Activated B cell treated with CpG ODN at 0.5 μM for 24 hours (primary cell): ENCODE measurements at regions of chr4 and their contacts with region 1.

Region 1: GRCh38 chr4:101169044-101170014 is 178.0 kb downstream of the PPP3CA start:
- DNase-seq: no peak
- ATAC-seq: peak; percentile 99
- H3K4me3 Mint-ChIP-seq: no peak overlapping the region
- H3K27ac Mint-ChIP-seq: no peak overlapping the region
- H3K4me1 Mint-ChIP-seq: peaks cover 21% of the 10 kb centered on the region
- H3K27me3 Mint-ChIP-seq: no peaks in the 10 kb centered on the region
- CTCF ChIP-seq: no peak

Region 2: DNA sequence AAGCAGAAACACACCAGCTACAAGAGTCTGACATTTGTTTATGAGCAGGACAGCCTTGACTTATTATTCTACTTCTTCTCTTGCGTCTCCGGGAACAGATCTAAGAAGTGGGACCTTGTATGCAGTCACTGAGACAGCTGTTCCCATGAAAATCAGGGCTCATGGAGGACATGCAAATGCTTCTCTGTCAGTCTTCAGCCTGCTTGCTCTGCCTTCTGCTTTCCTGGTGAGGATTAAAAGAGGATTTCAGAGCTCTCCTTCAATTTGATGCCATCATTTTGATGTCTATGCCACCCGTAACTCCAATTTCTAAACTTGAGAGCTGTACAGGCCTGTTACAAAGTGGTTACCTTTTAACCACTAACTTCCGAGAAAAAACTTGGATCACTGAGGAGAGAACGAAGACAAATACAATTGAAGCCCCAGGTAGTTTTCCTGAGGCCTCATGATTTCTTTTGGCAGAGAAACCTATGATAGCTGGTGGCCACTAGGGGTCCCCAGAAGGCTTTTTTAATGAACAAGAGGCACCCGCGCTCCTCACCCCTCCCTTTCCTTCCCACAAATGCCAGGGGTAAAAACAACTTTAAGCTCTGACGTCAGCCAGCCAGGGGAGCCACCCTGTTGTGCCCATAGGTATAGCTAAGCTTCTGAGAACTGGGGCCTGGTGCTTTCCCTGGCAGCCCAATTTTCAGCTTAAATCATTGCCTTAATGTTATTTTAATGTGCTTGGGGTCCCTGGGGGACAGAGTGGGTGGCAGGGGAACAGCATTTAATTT is 1076.0 kb before region 1 on chr4:
- CTCF ChIA-PET with region 1: interaction called, 9 read pairs
- POLR2A ChIA-PET with region 1: no interaction called
- intact Hi-C with region 1: loop called (anchors 10 kb)
- DNase-seq: peak; percentile 58
- ATAC-seq: peak; percentile 97
- H3K4me3 Mint-ChIP-seq: no peak overlapping the region
- H3K27ac Mint-ChIP-seq: peak overlapping the region; percentile 78
- H3K4me1 Mint-ChIP-seq: peaks cover 32% of the 10 kb centered on the region
- H3K27me3 Mint-ChIP-seq: no peaks in the 10 kb centered on the region
- CTCF ChIP-seq: no peak

Region 3: DNA sequence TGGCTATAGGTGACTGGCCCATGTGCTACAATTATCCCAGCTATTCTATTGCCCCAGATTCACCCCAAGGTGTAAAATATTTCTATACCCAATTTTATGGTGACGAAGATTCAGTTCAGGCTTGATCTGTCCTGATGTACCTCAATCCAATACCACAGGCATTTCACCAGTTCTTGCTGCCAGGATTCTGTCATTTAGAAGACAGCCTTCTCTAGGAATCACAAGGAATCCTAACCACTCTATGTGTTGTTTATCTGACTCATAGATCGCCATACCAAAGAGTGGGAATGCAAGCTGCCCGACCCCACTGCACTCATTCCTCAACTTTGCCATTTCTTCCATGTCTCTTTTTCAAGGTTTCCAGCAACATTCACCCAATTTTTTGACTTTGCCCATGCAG is 296.5 kb before region 1 on chr4:
- CTCF ChIA-PET with region 1: no interaction called
- POLR2A ChIA-PET with region 1: no interaction called
- intact Hi-C with region 1: no loop called
- DNase-seq: no peak
- ATAC-seq: no peak
- H3K4me3 Mint-ChIP-seq: no peak overlapping the region
- H3K27ac Mint-ChIP-seq: no peak overlapping the region
- H3K4me1 Mint-ChIP-seq: no peaks in the 10 kb centered on the region
- H3K27me3 Mint-ChIP-seq: peaks cover 6% of the 10 kb centered on the region
- CTCF ChIP-seq: no peak

Region 4: GRCh38 chr4:101183666-101184373 is 14.5 kb after region 1 on chr4:
- CTCF ChIA-PET with region 1: interaction called, 5 read pairs
- POLR2A ChIA-PET with region 1: no interaction called
- intact Hi-C with region 1: loop called (anchors 1 kb)
- DNase-seq: no peak
- ATAC-seq: no peak
- H3K4me3 Mint-ChIP-seq: no peak overlapping the region
- H3K27ac Mint-ChIP-seq: no peak overlapping the region
- H3K4me1 Mint-ChIP-seq: peaks cover 53% of the 10 kb centered on the region
- H3K27me3 Mint-ChIP-seq: no peaks in the 10 kb centered on the region
- CTCF ChIP-seq: no peak

Region 5: GRCh38 chr4:101596781-101597552 is 427.6 kb after region 1 on chr4:
- CTCF ChIA-PET with region 1: interaction called, 7 read pairs
- POLR2A ChIA-PET with region 1: no interaction called
- intact Hi-C with region 1: loop called (anchors 1 kb)
- DNase-seq: no peak
- ATAC-seq: peak; percentile 62
- H3K4me3 Mint-ChIP-seq: peak overlapping the region; percentile 7
- H3K27ac Mint-ChIP-seq: peak overlapping the region; percentile 74
- H3K4me1 Mint-ChIP-seq: peaks cover 15% of the 10 kb centered on the region
- H3K27me3 Mint-ChIP-seq: no peaks in the 10 kb centered on the region
- CTCF ChIP-seq: no peak

Region 6: GRCh38 chr4:101914761-101915160 is 745.4 kb after region 1 on chr4:
- CTCF ChIA-PET with region 1: no interaction called
- POLR2A ChIA-PET with region 1: no interaction called
- intact Hi-C with region 1: loop called (anchors 10 kb)
- DNase-seq: no peak
- ATAC-seq: no peak
- H3K4me3 Mint-ChIP-seq: no peak overlapping the region
- H3K27ac Mint-ChIP-seq: no peak overlapping the region
- H3K4me1 Mint-ChIP-seq: peaks cover 9% of the 10 kb centered on the region
- H3K27me3 Mint-ChIP-seq: no peaks in the 10 kb centered on the region
- CTCF ChIP-seq: no peak

Region 7: DNA sequence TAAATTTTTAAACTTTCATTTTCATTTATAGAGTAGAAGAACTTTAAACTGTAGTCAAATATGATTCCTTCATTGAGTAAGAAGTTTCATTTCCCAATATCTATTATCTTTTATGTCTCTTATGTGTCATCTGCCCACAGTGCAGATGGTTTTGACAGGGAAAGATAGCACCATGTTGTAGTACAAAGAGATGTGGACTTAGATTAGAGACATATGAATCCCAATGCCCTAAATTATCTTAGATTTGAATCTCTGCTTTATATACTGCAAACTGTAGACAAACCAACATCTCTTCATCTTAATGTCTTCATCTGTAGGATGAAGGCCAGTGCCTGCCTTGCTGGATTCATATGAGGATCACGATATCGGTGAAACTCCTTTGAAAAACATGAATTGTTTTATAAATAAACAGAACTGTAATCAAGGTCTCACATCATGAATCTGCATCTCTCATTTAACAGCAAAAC is 838.7 kb after region 1 on chr4:
- CTCF ChIA-PET with region 1: no interaction called
- POLR2A ChIA-PET with region 1: no interaction called
- intact Hi-C with region 1: loop called (anchors 5 kb)
- DNase-seq: no peak
- ATAC-seq: peak; percentile 92
- H3K4me3 Mint-ChIP-seq: peak overlapping the region; percentile 38
- H3K27ac Mint-ChIP-seq: peak overlapping the region; percentile 57
- H3K4me1 Mint-ChIP-seq: peaks cover 59% of the 10 kb centered on the region
- H3K27me3 Mint-ChIP-seq: no peaks in the 10 kb centered on the region
- CTCF ChIP-seq: no peak

Region 8: DNA sequence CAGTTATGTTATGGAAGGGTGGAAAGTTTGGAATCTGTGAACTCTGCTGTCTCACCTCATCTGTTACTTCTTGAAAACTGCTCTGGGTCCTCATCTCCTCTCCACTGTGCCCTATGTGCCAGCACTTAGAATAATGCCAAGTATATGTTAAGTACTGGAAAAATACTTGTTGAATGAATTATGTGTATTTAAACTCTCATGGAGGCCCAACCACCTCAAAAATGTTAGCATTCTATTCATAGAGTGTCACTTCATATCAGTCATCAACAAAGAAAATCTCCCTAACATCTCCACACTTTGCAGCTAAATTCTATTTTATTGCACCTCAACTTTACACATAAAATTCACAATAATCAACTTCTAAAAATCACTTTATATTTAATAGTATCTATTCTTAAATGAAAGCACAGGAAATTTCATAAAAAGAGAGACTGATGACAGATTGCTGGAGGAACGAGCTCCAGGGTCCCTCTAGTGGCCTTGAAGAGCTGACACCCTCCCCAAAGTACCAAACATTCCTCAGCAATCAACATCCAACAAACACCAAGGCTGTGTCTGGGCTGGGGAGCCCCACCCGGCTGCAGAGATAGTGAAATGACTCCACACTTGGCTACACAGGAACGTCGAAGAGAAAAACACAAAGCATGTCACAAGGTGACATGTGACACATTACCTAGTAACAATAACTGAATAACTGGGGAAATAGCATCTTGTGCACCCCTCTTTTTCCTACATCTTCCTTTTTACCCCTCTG is 1130.2 kb after region 1 on chr4:
- CTCF ChIA-PET with region 1: interaction called, 3 read pairs
- POLR2A ChIA-PET with region 1: no interaction called
- intact Hi-C with region 1: loop called (anchors 1 kb)
- DNase-seq: no peak
- ATAC-seq: peak; percentile 60
- H3K4me3 Mint-ChIP-seq: no peak overlapping the region
- H3K27ac Mint-ChIP-seq: no peak overlapping the region
- H3K4me1 Mint-ChIP-seq: peaks cover 10% of the 10 kb centered on the region
- H3K27me3 Mint-ChIP-seq: no peaks in the 10 kb centered on the region
- CTCF ChIP-seq: peak; percentile 14